ENCODE measurements at regions of chr16 and their contacts with region 1.

Region 1: GRCh38 chr16:27367461-27368357 is 34.3 kb upstream of the IL21R start:
- DNase-seq: peak; percentile 81 to 88 (median 84)
- ATAC-seq: peak; percentile 77 to 89 (median 86)
- H3K4me3 ChIP-seq: peak overlapping the region in 10 of 12 donors; percentile 1 to 48 (median 30)
- H3K27ac ChIP-seq: peak overlapping the region in 11 of 12 donors; percentile 40 to 91 (median 53)
- H3K4me1 ChIP-seq: peaks cover 0 to 31% (median 12%) of the 10 kb centered on the region in 12 donors
- H3K27me3 ChIP-seq: no peaks in the 10 kb centered on the region
- CTCF ChIP-seq: peak; percentile 72 to 93 (median 86)
- POLR2A ChIP-seq: no peak

Region 2: DNA sequence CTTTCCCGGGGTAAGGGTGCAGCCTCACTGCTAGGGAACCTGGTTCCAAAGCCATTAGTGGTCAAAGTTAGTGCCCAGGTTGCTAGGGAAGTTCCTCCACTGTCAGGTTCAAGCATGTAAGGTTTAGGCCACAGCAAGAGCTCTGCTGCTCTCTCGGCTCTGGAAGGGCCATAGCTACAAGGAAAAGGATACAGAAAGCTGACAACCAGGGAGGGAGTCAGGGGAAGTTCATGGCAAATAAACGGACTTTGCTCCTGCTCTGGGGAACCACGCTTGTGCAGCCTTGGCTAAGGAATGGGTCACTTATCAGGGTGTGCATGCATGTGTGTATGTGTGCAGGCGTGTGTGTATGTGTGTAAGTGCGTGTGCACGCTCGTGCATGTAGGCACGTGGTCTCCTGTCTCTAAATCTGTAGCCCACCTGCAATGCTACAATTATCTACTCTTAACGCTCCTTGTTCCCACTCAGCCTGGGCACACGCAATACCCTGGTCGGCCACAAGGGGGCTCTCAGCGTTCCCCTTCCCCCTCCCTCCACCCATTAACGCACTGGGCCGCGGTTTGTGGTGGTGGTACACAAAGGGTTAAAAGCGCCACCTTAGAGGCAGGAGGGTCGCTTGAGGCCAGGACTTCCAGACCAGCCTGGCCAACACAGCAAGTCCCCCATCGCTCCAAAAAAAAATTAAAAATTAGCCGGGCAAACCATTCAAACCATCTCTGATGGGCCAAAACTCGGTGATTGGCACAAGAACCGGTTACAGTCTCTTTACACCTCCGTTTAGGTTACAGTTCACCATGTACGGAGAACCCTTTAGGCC is 212.8 kb before region 1 on chr16:
- intact Hi-C with region 1: loop called in 4 of 10 experiments (anchors 5 kb)
- DNase-seq: peak; percentile 37 to 82 (median 46)
- ATAC-seq: peak in 3 of 4 donors; percentile 70 to 86 (median 72)
- H3K4me3 ChIP-seq: no peak overlapping the region
- H3K27ac ChIP-seq: no peak overlapping the region
- H3K4me1 ChIP-seq: peaks cover 0 to 6% (median 0%) of the 10 kb centered on the region in 12 donors
- H3K27me3 ChIP-seq: no peaks in the 10 kb centered on the region
- CTCF ChIP-seq: peak; percentile 79 to 99 (median 95)
- POLR2A ChIP-seq: no peak

Region 3: DNA sequence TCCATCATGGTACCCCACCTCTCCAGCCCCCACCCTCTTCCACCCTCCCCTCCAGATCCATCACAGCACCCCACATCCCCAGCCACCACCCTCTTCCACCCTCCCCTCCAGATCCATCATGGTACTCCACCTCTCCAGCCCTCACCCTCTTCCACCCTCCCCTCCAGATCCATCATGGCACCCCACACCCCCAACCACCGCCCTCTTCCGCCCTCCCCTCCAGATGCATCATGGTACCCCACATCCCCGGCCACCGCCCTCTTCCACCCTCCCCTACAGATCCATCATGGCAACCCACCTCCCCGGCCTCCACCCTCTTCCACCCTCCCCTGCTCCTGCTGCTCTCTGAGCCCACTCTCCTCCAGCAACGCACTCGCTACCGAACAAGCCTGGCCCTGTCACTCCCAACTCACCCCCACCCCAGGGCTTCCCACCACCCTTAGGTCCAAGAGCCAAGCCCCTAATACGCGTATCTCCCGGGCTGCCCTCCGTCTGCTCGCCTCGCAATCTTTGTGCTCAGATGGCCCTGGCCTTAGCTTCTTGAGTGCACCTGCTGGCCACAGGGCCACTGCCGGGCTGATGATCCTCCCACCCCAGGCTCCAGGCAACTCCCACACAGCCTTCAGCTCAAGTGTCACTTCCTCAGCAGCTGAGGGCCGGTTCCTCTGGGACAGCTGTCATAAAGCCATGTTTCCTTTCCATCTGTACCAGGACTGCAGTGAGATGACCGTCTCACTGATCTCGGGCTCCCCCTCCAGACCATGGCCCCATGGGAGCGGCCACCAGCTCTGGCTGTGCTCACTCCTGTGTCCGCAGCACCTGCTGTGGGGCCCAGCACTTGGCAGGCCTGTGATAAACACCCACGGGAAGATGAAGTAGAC is 138.8 kb before region 1 on chr16:
- intact Hi-C with region 1: loop called in 9 of 10 experiments (anchors 2 to 5 kb)
- DNase-seq: peak; percentile 59 to 73 (median 70)
- ATAC-seq: peak; percentile 52 to 89 (median 52)
- H3K4me3 ChIP-seq: no peak overlapping the region
- H3K27ac ChIP-seq: no peak overlapping the region
- H3K4me1 ChIP-seq: peaks cover 0 to 37% (median 6%) of the 10 kb centered on the region in 12 donors
- H3K27me3 ChIP-seq: no peaks in the 10 kb centered on the region
- CTCF ChIP-seq: peak in 2 of 12 donors; percentile 15 to 18
- POLR2A ChIP-seq: peak in 1 of 2 donors; percentile 6

Region 4: GRCh38 chr16:27242868-27243590 is 124.7 kb before region 1 on chr16:
- intact Hi-C with region 1: loop called in 2 of 10 experiments (anchors 5 kb)
- DNase-seq: peak in 4 of 5 donors; percentile 43 to 72 (median 62)
- ATAC-seq: peak; percentile 66 to 76 (median 72)
- H3K4me3 ChIP-seq: peak overlapping the region in 8 of 12 donors; percentile 17 to 33 (median 26)
- H3K27ac ChIP-seq: peak overlapping the region; percentile 7 to 82 (median 57)
- H3K4me1 ChIP-seq: peaks cover 0 to 75% (median 40%) of the 10 kb centered on the region in 12 donors
- H3K27me3 ChIP-seq: no peaks in the 10 kb centered on the region
- CTCF ChIP-seq: no peak
- POLR2A ChIP-seq: no peak

Region 5: GRCh38 chr16:27455700-27456099 is 88.0 kb after region 1 on chr16:
- intact Hi-C with region 1: loop called in 3 of 10 experiments (anchors 5 kb)
- DNase-seq: peak in 2 of 5 donors; percentile 25 to 30
- ATAC-seq: peak in 3 of 4 donors; percentile 10 to 70 (median 29)
- H3K4me3 ChIP-seq: no peak overlapping the region
- H3K27ac ChIP-seq: peak overlapping the region in 2 of 12 donors; percentile 14 to 24
- H3K4me1 ChIP-seq: peaks cover 0 to 40% (median 11%) of the 10 kb centered on the region in 12 donors
- H3K27me3 ChIP-seq: peaks cover 0 to 10% (median 0%) of the 10 kb centered on the region in 9 donors
- CTCF ChIP-seq: no peak
- POLR2A ChIP-seq: no peak